Activated CD8-positive, alpha-beta T cell treated with anti-CD3 and anti-CD28 coated beads for 36 hours (primary cell): ENCODE measurements at regions of chr17 and their contacts with region 1.

Region 1: DNA sequence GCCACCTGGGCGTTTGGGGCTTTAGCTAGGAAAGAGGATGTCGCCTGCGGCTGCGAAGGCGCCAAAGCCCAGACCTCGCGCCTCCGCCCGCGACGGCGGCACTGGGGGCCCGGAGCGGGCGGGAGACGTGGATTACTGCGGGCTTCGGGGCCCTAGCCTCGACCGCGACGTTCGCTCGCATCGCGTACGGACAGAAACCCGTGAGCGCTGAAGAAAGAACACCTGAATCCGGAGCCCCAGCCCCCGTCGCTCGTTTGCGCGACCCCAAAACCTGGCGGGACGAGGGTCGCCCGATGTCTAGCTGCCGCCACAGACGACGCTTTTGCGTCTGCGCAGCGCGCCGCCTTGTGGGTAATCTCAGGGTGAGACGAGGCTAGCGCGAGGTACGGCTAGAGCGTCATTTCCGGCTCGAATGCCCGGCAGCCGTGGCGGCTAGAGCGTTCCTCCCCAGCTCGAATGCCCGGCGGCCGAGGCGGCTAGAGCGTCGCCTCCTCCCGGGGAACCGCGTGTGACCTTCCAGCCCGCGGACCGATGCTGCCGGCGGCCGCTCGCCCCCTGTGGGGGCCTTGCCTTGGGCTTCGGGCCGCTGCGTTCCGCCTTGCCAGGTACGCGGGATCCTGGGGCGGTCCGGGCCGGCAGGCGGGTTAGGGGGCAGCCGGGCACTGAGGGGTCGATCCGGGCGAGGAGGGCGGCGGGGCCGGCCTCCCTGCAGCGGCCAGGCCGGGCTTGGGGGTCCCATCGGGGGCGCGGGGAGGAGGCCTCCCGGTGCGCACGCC is at the start of gene MRPL12:
- DNase-seq: peak; percentile 94
- ATAC-seq: peak; percentile 88
- H3K4me3 Mint-ChIP-seq: peak within 1 kb of the TSS; percentile 94
- H3K27ac Mint-ChIP-seq: peak within 1 kb of the TSS; percentile 96
- H3K4me1 Mint-ChIP-seq: peaks cover 24% of the 10 kb centered on the region
- H3K27me3 Mint-ChIP-seq: no peaks in the 10 kb centered on the region
- CTCF ChIP-seq: no peak
- total RNA-seq, gene MRPL12: 149 to 152 TPM

Region 2: GRCh38 chr17:81666342-81667191 is 36.6 kb before region 1 on chr17 and contains the starts of genes CCDC137 and OXLD1:
- CTCF ChIA-PET with region 1: interaction called, 3 read pairs
- POLR2A ChIA-PET with region 1: interaction called, 14 read pairs
- intact Hi-C with region 1: no loop called
- DNase-seq: peak; percentile 97
- ATAC-seq: peak; percentile 85
- H3K4me3 Mint-ChIP-seq: peak within 1 kb of the TSS; percentile 88
- H3K27ac Mint-ChIP-seq: peak within 1 kb of the TSS; percentile 99
- H3K4me1 Mint-ChIP-seq: peaks cover 50% of the 10 kb centered on the region
- H3K27me3 Mint-ChIP-seq: no peaks in the 10 kb centered on the region
- CTCF ChIP-seq: no peak
- total RNA-seq, gene CCDC137: 34.1 to 37.2 TPM
- total RNA-seq, gene OXLD1: 50.1 to 52.6 TPM

Region 3: GRCh38 chr17:81833160-81833920 is 130.2 kb after region 1 on chr17 and contains the start of gene MCRIP1:
- CTCF ChIA-PET with region 1: no interaction called
- POLR2A ChIA-PET with region 1: interaction called, 14 read pairs
- intact Hi-C with region 1: no loop called
- DNase-seq: peak; percentile 96
- ATAC-seq: peak; percentile 82
- H3K4me3 Mint-ChIP-seq: peak within 1 kb of the TSS; percentile 95
- H3K27ac Mint-ChIP-seq: peak within 1 kb of the TSS; percentile 95
- H3K4me1 Mint-ChIP-seq: peaks cover 25% of the 10 kb centered on the region
- H3K27me3 Mint-ChIP-seq: no peaks in the 10 kb centered on the region
- CTCF ChIP-seq: no peak
- total RNA-seq, gene MCRIP1: 55.1 to 56.5 TPM